Mammary epithelial cell (primary cell): ENCODE measurements at regions of chr20 and their contacts with region 1.

Region 1: DNA sequence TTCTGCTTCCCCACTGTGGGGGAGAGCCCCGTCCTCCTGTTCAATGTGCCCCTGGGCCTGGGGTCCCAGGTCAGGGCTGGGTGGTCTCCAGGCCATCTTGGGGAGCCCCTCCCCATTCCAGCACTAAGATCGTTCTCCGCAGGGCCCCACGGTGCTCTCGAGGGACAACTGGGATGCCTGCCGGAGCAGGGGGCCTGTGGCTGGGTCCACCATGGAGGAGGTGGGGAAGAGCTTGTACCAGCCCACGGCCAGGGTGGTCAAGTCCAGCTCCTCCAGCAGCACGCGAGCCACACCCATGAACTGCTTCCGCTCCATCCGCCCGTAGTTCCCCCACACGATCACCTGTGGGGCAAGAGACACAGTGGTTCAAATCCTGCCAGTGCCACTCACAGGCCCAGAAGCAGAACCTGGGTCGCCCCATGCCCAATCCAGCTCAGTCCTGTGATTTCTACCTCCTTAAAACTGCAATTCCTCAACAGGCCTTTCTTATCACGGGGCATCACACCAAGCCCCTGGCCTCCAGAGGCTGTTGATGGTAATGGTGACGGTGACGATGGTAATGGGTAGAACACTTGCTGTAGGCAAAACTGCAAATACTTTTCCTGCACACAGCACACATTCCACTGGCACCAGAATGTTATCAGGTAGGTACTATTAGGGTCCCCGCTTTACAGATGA is 10.5 kb downstream of the KCNK15 start:
- DNase-seq: no peak
- H3K4me3 ChIP-seq: no peak overlapping the region
- H3K27ac ChIP-seq: no peak overlapping the region
- H3K4me1 ChIP-seq: no peaks in the 10 kb centered on the region
- H3K27me3 ChIP-seq: no peaks in the 10 kb centered on the region
- CTCF ChIP-seq: no peak

Region 2: DNA sequence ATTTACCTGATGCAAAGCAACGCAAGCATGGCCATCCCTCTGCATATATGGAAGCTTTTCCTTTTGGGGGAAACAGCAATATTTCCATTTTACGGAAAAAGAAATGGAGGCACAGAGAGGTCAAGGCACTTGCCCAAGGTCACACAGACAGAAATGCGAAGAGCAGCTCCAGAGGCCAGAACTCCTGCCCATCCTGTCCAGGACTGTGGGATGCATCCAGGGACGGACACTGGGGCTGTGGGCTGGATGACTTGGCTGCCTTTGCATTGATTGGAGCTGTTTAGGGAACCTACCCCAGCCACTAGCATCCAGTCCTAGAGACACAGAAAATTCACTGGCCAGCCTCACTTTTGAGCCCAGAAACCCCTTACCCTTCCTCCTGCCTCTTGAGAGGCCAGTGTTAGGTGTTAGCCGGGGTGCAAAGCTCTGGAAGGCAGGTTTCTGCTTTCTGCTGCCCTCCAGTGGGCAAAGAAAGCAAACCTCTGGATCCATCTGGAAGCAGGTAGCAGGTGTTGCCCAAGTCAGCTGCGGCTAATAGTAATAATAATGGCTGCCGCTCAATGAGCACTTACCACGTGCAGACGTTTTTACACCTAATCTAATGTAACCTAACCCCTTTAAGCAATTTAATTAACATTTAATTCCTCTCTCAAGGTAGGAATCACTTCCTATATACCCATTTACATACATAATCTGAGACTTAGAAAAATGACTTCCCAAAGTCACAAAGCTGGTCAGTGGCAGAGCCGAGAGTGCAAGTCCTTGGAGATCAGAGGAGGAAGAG is 72.7 kb before region 1 on chr20:
- CTCF ChIA-PET with region 1: no interaction called
- dilution Hi-C with region 1: loop called (anchors 5 kb)
- in situ Hi-C with region 1: no loop called
- intact Hi-C with region 1: no loop called
- DNase-seq: peak; percentile 58
- H3K4me3 ChIP-seq: no peak overlapping the region
- H3K27ac ChIP-seq: no peak overlapping the region
- H3K4me1 ChIP-seq: peaks cover 8% of the 10 kb centered on the region
- H3K27me3 ChIP-seq: no peaks in the 10 kb centered on the region
- CTCF ChIP-seq: peak; percentile 63 to 84

Region 3: GRCh38 chr20:44805979-44806620 is 50.0 kb after region 1 on chr20:
- CTCF ChIA-PET with region 1: no interaction called
- dilution Hi-C with region 1: loop called (anchors 5 kb)
- in situ Hi-C with region 1: no loop called
- intact Hi-C with region 1: no loop called
- DNase-seq: no peak
- H3K4me3 ChIP-seq: no peak overlapping the region
- H3K27ac ChIP-seq: no peak overlapping the region
- H3K4me1 ChIP-seq: no peaks in the 10 kb centered on the region
- H3K27me3 ChIP-seq: peaks cover 21% of the 10 kb centered on the region
- CTCF ChIP-seq: no peak

Region 4: DNA sequence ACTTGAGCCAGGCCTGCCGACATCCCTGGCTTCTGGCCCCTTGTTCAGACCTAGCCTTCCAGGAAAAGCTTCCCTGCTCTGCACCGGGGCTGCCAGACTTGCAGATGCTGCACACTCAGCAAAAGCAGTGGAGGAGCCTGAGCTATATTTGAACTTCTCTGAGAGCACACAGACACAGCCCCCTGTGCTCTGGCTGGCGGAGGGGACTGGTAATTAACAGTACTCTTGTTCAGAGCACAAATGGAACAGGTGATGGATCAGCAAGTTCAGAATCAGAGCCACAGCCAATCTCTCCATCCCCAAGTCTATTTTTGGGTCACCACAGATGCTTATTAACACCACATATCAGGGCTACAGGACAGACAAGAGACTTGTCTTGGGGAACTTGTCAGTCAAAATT is 81.8 kb after region 1 on chr20:
- CTCF ChIA-PET with region 1: no interaction called
- dilution Hi-C with region 1: loop called (anchors 5 kb)
- in situ Hi-C with region 1: no loop called
- intact Hi-C with region 1: no loop called
- DNase-seq: no peak
- H3K4me3 ChIP-seq: no peak overlapping the region
- H3K27ac ChIP-seq: no peak overlapping the region
- H3K4me1 ChIP-seq: no peaks in the 10 kb centered on the region
- H3K27me3 ChIP-seq: peaks cover 9% of the 10 kb centered on the region
- CTCF ChIP-seq: no peak